A549 (cell line): ENCODE measurements at regions of chr16 and their contacts with region 1.

Region 1: DNA sequence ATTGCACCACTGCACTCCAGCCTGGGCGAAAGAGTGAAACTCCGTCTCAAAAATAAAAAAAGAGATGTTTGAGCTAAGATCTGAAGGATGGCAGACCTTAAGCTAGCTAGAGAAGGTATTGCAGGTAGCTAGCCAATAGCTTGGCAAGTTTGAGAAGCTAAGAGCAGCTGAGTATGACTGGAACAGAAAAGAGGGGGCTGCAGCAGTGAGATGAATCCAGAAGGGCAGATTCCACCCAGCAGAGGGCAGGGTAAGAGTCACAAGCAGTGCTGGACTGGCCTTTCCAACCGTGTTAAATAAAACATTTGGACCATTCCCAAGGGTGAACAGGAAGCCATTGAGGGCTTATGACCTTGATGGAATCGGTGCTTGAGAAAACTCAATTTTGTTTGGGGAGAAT is 5.7 kb upstream of the PHAF1 start:
- DNase-seq: peak in 1 of 2 experiments; percentile 54
- ATAC-seq: peak; percentile 75 to 87; a peak in 5 of 6 replicates
- H3K4me3 ChIP-seq: no peak overlapping the region
- H3K27ac ChIP-seq: no peak overlapping the region
- H3K4me1 ChIP-seq: 0 out of 3 replicates have a peak, but pooled peaks cover 2% of the 10 kb centered on the region
- CTCF ChIP-seq: peak; percentile 40
- EP300 ChIP-seq: no peak
- POLR2A ChIP-seq: no peak
- RAD21 ChIP-seq: peak in 1 of 2 experiments; percentile 21; a peak in 1 of 5 replicates

Region 2: DNA sequence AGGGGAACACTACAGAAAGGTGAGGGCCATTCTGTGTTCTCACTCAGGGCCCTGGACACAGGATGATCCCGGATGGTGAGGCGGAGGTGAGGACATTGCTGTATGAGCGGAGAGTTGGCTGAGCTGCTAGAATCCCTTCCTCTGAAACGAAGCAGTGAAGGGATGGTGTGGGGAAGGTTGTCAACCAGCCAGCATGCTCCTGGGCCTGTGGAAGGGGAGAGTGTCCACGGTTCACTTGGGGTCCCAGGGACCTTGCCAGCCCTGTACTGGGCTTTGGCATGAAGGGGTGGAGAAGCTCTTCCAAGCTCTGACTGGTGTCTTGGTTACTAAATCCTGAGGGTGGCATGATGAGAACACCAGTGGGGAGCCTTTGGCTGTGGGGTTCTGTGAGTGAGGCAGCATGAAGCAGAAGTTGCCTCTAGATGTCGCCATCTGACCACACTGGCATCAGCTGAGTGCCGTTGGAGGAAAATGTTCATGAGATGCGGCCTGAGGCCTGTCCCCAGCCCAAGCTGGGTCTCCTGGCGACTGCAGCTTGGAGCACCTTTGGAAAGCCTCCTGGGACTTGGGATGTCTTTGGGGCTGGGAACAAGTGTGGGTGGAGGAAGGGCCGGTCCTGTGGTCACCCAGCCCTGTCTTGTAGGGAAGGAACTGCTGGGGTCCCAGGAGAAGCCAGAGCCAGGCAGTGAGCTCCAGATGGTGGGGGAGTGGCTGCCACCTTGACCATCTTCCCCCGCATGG is 208.9 kb before region 1 on chr16:
- CTCF ChIA-PET with region 1: interaction called, 11 read pairs
- POLR2A ChIA-PET with region 1: no interaction called
- DNase-seq: peak; percentile 58 to 78
- ATAC-seq: peak; percentile 89 to 96
- H3K4me3 ChIP-seq: no peak overlapping the region
- H3K27ac ChIP-seq: peak overlapping the region in 1 of 2 experiments; percentile 17; a peak in 3 of 6 replicates
- H3K4me1 ChIP-seq: peaks cover 14% of the 10 kb centered on the region
- CTCF ChIP-seq: peak; percentile 87
- EP300 ChIP-seq: no peak
- POLR2A ChIP-seq: no peak
- RAD21 ChIP-seq: peak; percentile 92 to 98

Region 3: GRCh38 chr16:66961065-66961744 is 142.9 kb before region 1 on chr16 and contains the start of gene CES3:
- CTCF ChIA-PET with region 1: interaction called, 67 read pairs
- POLR2A ChIA-PET with region 1: no interaction called
- DNase-seq: peak; percentile 80 to 85
- ATAC-seq: peak; percentile 99 to 100
- H3K4me3 ChIP-seq: peak within 1 kb of the TSS; percentile 33
- H3K27ac ChIP-seq: peak within 1 kb of the TSS; percentile 49 to 82; a peak in 4 of 6 replicates
- H3K4me1 ChIP-seq: no peaks in the 10 kb centered on the region
- CTCF ChIP-seq: peak; percentile 85
- EP300 ChIP-seq: no peak
- POLR2A ChIP-seq: no peak
- RAD21 ChIP-seq: peak in 1 of 2 experiments; percentile 18; a peak in 1 of 5 replicates
- polyA plus RNA-seq, gene CES3: 3.8 and 4.1 TPM in 2 replicates

Region 4: GRCh38 chr16:67017810-67018488 is 86.1 kb before region 1 on chr16:
- CTCF ChIA-PET with region 1: interaction called, 93 read pairs
- POLR2A ChIA-PET with region 1: no interaction called
- DNase-seq: peak; percentile 93 to 97
- ATAC-seq: peak; percentile 89 to 98
- H3K4me3 ChIP-seq: no peak overlapping the region
- H3K27ac ChIP-seq: peak overlapping the region in 1 of 2 experiments; percentile 49; a peak in 2 of 6 replicates
- H3K4me1 ChIP-seq: peaks cover 3% of the 10 kb centered on the region; the same call in 2 of the 3 replicates
- CTCF ChIP-seq: peak; percentile 84
- EP300 ChIP-seq: no peak
- POLR2A ChIP-seq: no peak
- RAD21 ChIP-seq: peak; percentile 84 to 92

Region 5: GRCh38 chr16:67068212-67068753 is 35.8 kb before region 1 on chr16:
- CTCF ChIA-PET with region 1: interaction called, 13 read pairs
- POLR2A ChIA-PET with region 1: no interaction called
- DNase-seq: peak in 1 of 2 experiments; percentile 10
- ATAC-seq: peak in 1 of 2 experiments; percentile 35; a peak in 1 of 6 replicates
- H3K4me3 ChIP-seq: no peak overlapping the region
- H3K27ac ChIP-seq: no peak overlapping the region
- H3K4me1 ChIP-seq: 0 out of 3 replicates have a peak, but pooled peaks cover 9% of the 10 kb centered on the region
- CTCF ChIP-seq: no peak
- EP300 ChIP-seq: no peak
- POLR2A ChIP-seq: no peak
- RAD21 ChIP-seq: no peak

Region 6: DNA sequence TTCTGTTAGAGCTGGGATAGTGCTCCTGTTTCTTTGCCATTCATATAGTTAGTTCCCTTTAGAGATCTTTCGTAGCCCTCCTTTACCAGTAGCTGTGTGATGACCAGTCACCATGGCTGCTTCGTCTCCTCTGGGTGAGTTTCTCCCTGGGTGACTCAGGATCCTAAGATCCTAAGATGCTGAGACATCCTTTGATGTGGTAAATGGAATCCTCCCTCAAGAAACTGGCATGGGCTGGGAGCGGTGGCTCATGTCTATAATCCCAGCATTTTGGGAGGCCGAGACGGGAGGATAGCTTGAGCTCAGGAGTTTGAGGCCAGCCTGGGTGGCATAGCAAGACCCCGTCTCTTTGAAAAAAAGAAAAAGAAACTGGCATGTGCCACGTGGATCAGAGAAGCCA is 11.6 kb after region 1 on chr16:
- CTCF ChIA-PET with region 1: interaction called, 14 read pairs
- POLR2A ChIA-PET with region 1: interaction called, 3 read pairs
- DNase-seq: peak; percentile 58 to 68
- ATAC-seq: peak; percentile 82 to 84
- H3K4me3 ChIP-seq: no peak overlapping the region
- H3K27ac ChIP-seq: peak overlapping the region in 1 of 2 experiments; percentile 72; a peak in 3 of 6 replicates
- H3K4me1 ChIP-seq: peaks cover 44% of the 10 kb centered on the region
- CTCF ChIP-seq: no peak
- EP300 ChIP-seq: no peak
- POLR2A ChIP-seq: no peak
- RAD21 ChIP-seq: no peak

Region 7: DNA sequence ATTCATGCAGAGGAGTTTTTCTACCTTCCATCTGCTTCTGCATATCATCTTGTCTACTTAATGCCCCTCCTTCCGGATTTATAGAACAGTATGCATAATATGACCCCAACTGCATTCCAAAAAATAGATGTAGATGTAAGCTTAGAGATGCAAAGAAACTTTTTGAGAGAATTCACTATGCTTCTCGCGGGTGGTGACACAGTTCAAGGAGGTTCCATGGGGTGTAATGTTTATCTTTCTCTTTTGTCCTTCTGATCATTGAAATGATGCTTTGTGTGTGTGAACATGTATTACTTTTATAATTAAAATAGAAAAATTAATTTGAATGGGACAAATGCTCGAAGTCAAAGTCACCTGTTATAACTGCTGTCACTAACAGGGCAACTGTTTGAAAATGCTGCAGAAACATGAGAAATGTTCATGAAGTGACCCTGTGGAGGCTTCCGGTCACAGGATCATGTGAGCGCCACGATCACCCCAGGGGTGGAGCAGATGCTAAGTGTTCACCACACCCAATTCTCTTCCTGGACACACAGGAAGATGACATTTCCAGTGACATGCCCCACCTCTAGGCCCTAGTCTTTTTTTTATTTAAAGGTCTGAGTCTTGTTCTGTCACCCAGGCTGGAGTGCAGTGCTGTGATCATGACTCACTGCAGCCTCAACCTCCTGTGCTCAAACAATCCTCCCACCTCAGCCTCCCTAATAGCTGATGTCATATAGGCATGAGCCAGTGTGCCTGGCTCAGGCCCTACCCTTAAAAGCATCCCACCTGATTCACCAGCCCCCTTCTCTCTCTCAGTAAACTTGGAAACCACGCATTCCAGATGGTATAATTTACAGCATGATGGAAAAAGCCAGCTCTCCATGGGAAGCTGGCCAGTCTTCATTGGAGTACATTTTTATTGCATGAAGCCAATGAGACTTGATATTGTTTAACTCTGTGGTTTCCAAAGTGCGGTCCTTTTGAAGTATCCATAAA is 400.3 kb after region 1 on chr16:
- CTCF ChIA-PET with region 1: no interaction called
- POLR2A ChIA-PET with region 1: no interaction called
- DNase-seq: peak in 1 of 2 experiments; percentile 31
- ATAC-seq: peak; percentile 24 to 28; a peak in 3 of 6 replicates
- H3K4me3 ChIP-seq: no peak overlapping the region
- H3K27ac ChIP-seq: no peak overlapping the region
- H3K4me1 ChIP-seq: peaks cover 8% of the 10 kb centered on the region; the same call in 1 of the 3 replicates
- CTCF ChIP-seq: no peak
- EP300 ChIP-seq: no peak
- POLR2A ChIP-seq: no peak
- RAD21 ChIP-seq: no peak